K562 (cell line): ENCODE measurements at regions of chr12 and their contacts with region 1.

Region 1: DNA sequence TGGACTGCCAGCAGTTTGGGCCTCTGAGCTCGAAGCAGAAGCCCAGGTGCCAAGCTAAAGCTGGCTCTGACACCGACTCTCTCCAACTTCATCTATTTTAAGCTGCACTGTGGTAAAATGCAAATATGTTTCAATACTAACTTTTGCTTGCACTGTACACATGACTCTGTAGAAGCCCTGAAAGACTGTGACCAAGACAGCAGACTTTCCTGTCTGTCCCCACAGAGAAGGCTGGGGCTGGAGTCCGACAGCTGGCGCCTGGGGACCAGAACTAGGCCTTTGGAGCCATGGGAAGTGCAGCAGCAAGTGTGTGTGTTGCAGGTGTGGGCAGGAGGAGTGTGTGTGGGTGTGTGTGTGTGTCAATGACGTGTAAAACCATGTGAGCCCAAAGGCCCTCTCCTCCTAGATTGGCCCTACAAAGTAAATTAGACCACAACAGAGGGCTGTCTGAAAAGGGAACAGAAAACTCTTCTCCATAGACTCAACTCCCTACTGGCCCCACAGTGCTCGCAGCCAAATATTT is 16.4 kb upstream of the RAB35 start:
- DNase-seq: no peak
- ATAC-seq: no peak
- H3K4me3 ChIP-seq: no peak overlapping the region
- H3K27ac ChIP-seq: no peak overlapping the region
- H3K4me1 ChIP-seq: no peaks in the 10 kb centered on the region
- H3K27me3 ChIP-seq: no peaks in the 10 kb centered on the region
- CTCF ChIP-seq: no peak
- EP300 ChIP-seq: no peak
- POLR2A ChIP-seq: no peak
- RAD21 ChIP-seq: no peak

Region 2: DNA sequence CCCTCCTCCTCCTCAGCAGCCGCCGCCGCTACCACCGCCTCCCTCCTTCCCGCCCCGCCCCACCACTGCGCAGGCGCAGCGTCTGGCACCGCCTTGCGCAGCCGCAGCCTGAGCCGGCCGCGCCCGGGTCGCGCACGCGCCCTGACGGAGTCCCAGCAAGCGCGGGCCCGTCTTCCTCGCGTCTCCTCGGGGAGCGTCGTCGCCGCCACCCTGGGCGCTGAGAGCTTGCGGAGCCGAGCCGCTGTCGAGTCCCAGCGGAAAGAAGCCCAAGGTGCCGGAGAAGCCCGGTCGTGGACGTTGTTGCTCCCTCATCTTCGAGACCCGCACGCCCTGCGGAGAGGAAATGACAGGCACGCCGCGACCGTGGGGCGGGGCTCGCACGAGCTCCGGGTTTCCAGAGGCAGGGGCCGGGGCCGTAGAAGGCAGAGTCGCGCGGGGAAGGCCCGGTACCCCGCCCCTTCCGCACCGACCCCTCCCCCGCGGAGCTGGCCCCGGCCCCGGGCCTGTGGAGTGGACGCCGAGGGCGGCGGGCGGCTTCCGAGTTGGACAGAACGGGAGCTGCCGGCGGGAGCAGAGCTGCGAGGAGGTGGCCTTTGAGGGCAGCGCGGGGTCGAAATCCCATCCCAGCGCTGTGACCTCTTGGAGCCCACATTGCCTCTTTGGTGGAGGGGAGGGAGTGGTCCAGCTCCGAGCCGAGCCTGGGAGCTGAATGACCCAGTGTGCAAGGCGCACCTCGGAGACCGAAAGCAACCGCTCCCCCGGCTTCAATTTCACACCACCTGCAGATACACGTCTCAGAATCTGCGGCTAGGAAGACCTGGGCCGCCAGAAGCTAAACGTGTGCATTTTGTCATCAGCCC is 15.9 kb before region 1 on chr12:
- CTCF ChIA-PET with region 1: no interaction called
- POLR2A ChIA-PET with region 1: interaction called, 27 read pairs
- in situ Hi-C with region 1: no loop called
- intact Hi-C with region 1: no loop called
- DNase-seq: peak; percentile 96 to 100 (median 99)
- ATAC-seq: peak; percentile 88
- H3K4me3 ChIP-seq: peak overlapping the region; percentile 75
- H3K27ac ChIP-seq: peak overlapping the region; percentile 71
- H3K4me1 ChIP-seq: peaks cover 15 to 26% of the 10 kb centered on the region in 2 experiments; a peak in 4 of 5 replicates
- H3K27me3 ChIP-seq: no peaks in the 10 kb centered on the region
- CTCF ChIP-seq: no peak
- EP300 ChIP-seq: no peak
- POLR2A ChIP-seq: peak; percentile 90
- RAD21 ChIP-seq: no peak